Common myeloid progenitor, CD34-positive (primary cell): ENCODE measurements at regions of chr16 and their contacts with region 1.

Region 1: DNA sequence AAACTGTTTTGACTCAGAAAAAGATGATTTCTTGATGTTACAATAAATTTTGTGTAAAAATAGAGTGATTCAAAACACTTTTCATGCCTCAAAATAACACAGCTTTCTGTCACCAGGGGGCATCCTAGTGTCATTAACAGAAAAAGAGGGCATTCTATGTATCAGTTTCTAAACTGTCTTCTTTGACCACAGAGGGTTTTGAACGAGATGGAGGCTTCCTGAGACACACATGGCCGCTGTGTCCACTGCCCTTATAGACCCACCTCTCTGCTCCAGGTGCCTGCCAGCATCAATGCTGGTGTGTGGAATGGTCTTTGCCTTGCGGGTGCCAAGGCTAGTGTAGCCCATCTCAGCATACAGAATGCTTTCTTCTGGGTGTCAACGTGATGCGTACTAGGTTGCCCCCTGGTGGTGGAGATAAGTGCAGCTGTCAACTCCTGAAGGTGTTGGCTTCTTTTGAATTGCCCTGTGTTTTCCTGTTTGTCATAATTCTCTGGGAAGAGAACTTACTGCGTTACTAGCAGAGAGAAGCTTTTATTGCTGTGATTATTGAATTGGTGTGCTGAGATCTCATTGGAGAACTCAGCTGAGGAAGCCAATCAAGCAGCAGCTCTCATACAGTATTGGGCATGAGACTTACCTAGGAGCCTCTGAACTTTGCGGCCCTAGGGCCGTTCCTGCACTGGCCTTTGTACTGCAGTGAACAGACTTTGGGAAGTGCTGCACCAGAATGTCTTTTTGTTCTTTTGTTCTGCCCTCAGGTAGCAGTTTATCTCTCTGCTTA is 38.6 kb downstream of the USP10 start:
- DNase-seq: peak; percentile 83 to 89 (median 85)
- H3K4me3 ChIP-seq: peak overlapping the region in 2 of 7 experiments; percentile 33 to 58
- H3K27ac ChIP-seq: peak overlapping the region in 1 of 2 experiments; percentile 4
- H3K4me1 ChIP-seq: peaks cover 0 to 50% (median 21%) of the 10 kb centered on the region in 4 experiments
- H3K27me3 ChIP-seq: no peaks in the 10 kb centered on the region

Region 2: GRCh38 chr16:84672276-84673202 is 65.9 kb before region 1 on chr16:
- CTCF ChIA-PET with region 1: interaction called, 14 read pairs
- POLR2A ChIA-PET with region 1: interaction called, 3 read pairs
- DNase-seq: peak; percentile 75 to 84 (median 81)
- H3K4me3 ChIP-seq: no peak overlapping the region
- H3K27ac ChIP-seq: no peak overlapping the region
- H3K4me1 ChIP-seq: no peaks in the 10 kb centered on the region
- H3K27me3 ChIP-seq: peaks cover 0 to 2% (median 0%) of the 10 kb centered on the region in 5 experiments

Region 3: GRCh38 chr16:84726079-84726668 is 12.3 kb before region 1 on chr16:
- CTCF ChIA-PET with region 1: interaction called, 37 read pairs
- POLR2A ChIA-PET with region 1: interaction called, 3 read pairs
- DNase-seq: peak; percentile 79 to 85 (median 84)
- H3K4me3 ChIP-seq: peak overlapping the region in 6 of 7 experiments; percentile 52 to 78 (median 69)
- H3K27ac ChIP-seq: peak overlapping the region; percentile 20 to 69
- H3K4me1 ChIP-seq: peaks cover 29 to 88% (median 51%) of the 10 kb centered on the region in 4 experiments
- H3K27me3 ChIP-seq: no peaks in the 10 kb centered on the region

Region 4: GRCh38 chr16:84761448-84762368 is 23.3 kb after region 1 on chr16:
- CTCF ChIA-PET with region 1: interaction called, 78 read pairs
- POLR2A ChIA-PET with region 1: no interaction called
- DNase-seq: no peak
- H3K4me3 ChIP-seq: no peak overlapping the region
- H3K27ac ChIP-seq: no peak overlapping the region
- H3K4me1 ChIP-seq: peaks cover 14 to 25% (median 17%) of the 10 kb centered on the region in 4 experiments
- H3K27me3 ChIP-seq: no peaks in the 10 kb centered on the region

Region 5: DNA sequence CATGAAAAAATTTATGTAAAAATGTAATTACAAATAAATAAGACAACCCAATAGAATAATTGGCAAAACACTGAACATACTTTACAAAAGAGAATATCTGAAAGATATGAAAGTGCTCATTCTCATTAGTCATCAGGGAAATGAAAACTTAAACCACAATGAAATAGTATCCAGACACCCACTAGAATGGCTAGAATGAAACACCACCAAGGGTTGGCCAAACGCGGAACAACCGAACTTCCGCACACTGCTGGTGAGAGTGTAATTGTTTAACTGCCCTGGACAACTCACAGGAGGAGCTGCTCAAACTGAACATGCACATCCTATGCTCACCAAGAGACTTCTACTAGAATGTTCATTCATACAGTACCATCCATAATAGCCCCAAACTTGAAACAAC is 278.7 kb after region 1 on chr16:
- CTCF ChIA-PET with region 1: no interaction called
- POLR2A ChIA-PET with region 1: no interaction called
- DNase-seq: peak; percentile 79 to 94 (median 93)
- H3K4me3 ChIP-seq: peak overlapping the region in 3 of 7 experiments; percentile 9 to 53 (median 45)
- H3K27ac ChIP-seq: peak overlapping the region in 1 of 2 experiments; percentile 54
- H3K4me1 ChIP-seq: peaks cover 6 to 37% (median 25%) of the 10 kb centered on the region in 4 experiments
- H3K27me3 ChIP-seq: no peaks in the 10 kb centered on the region

Region 6: GRCh38 chr16:85082173-85083050 is 344.0 kb after region 1 on chr16:
- CTCF ChIA-PET with region 1: no interaction called
- POLR2A ChIA-PET with region 1: no interaction called
- DNase-seq: peak in 1 of 3 donors; percentile 44
- H3K4me3 ChIP-seq: peak overlapping the region in 4 of 7 experiments; percentile 2 to 68 (median 44)
- H3K27ac ChIP-seq: no peak overlapping the region
- H3K4me1 ChIP-seq: peaks cover 0 to 61% (median 40%) of the 10 kb centered on the region in 4 experiments
- H3K27me3 ChIP-seq: peaks cover 0 to 10% (median 0%) of the 10 kb centered on the region in 5 experiments